ENCODE measurements at regions of chr2 and their contacts with region 1.

Region 1: GRCh38 chr2:190781604-190782198 is 98.9 kb upstream of the GLS start:
- DNase-seq: no peak
- H3K4me3 ChIP-seq: no peak overlapping the region
- H3K27ac ChIP-seq: no peak overlapping the region
- H3K4me1 ChIP-seq: peaks cover 7% of the 10 kb centered on the region
- H3K27me3 ChIP-seq: no peaks in the 10 kb centered on the region
- CTCF ChIP-seq: peak; percentile 71

Region 2: GRCh38 chr2:191030521-191031154 is 248.9 kb after region 1 on chr2:
- intact Hi-C with region 1: loop called (anchors 5 kb)
- DNase-seq: no peak
- H3K4me3 ChIP-seq: no peak overlapping the region
- H3K27ac ChIP-seq: no peak overlapping the region
- H3K4me1 ChIP-seq: peaks cover 7% of the 10 kb centered on the region
- H3K27me3 ChIP-seq: no peaks in the 10 kb centered on the region
- CTCF ChIP-seq: peak; percentile 75

Measured in left ventricle myocardium inferior (tissue), 1 donor.